BJ (cell line): ENCODE measurements at regions of chr20 and their contacts with region 1.

Region 1: DNA sequence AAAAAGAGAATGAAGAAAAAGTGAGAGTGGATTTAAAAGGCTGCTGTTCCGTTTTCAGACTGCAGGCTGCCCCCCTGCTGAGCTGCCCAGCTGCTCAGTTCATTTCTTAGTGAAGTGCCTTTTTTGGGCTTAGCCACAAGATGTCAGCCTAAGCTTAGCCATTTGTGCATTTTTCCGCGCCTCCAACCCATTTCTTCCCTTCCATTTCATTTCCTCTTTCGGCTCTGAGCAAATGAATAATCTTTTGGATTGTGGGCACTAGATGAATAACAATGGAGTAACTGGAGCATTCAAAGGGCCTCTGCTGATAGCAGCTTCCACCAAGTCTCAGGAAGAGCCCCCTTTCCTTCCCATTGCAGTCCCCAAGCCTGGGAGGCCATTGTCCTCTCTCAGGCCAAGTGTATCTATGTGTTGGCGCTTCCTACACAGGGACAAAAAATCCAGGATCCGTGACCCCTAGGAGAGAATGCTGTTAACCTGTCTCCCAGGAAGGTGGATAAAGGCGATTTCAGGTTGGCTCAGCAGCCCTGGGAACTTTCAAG is 83.5 kb upstream of the SPTLC3 start:
- DNase-seq: no peak
- H3K4me3 ChIP-seq: no peak overlapping the region
- H3K27me3 ChIP-seq: peaks cover 3% of the 10 kb centered on the region
- CTCF ChIP-seq: peak; percentile 87

Region 2: DNA sequence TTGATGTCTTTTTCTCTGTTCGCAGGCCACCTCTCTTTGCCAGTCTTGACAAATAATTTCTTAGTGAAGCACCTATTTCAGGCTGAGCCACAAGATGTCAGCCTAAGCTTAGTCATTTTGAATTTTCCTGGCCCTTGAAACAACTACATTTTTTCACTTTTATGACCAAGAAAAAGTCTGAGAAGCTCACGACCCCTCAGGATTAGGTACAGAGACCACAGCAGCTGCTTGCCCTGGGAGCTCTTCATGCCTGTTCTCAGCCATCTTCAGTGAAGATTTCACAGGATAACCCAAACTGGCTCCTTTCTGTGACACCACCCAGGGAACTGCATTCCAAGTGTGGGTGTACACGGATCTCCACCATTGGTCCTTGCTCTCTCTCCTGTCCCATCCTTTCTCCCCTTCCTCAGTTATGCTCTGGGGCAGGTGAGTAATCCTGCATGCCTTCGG is 45.1 kb after region 1 on chr20:
- CTCF ChIA-PET with region 1: interaction called, 48 read pairs
- POLR2A ChIA-PET with region 1: no interaction called
- DNase-seq: no peak
- H3K4me3 ChIP-seq: no peak overlapping the region
- H3K27me3 ChIP-seq: peaks cover 2% of the 10 kb centered on the region; the same call in 1 of the 2 replicates
- CTCF ChIP-seq: peak; percentile 54

Region 3: DNA sequence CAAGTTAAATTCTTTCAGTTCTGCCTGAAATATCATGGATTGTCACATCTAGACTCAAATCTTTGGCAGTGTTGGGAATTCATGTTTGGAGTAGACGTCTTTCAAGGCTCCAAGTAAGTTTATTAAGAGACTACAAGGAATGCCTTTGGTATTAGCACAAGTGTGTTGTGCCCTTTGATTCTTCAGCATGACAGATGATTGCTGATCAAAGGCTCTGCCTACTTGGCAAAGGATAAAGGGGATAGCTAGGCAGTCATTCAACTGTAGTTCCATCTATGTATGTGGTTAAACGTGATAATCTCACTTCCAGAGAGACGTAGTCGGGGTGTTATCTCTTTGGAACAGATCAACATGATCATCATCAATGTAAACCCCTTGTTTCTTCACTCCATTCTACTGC is 169.7 kb after region 1 on chr20:
- CTCF ChIA-PET with region 1: interaction called, 14 read pairs
- POLR2A ChIA-PET with region 1: no interaction called
- DNase-seq: no peak
- H3K4me3 ChIP-seq: no peak overlapping the region
- H3K27me3 ChIP-seq: no peaks in the 10 kb centered on the region
- CTCF ChIP-seq: no peak

Region 4: GRCh38 chr20:13105864-13106457 is 180.7 kb after region 1 on chr20:
- CTCF ChIA-PET with region 1: interaction called, 30 read pairs
- POLR2A ChIA-PET with region 1: no interaction called
- DNase-seq: no peak
- H3K4me3 ChIP-seq: no peak overlapping the region
- H3K27me3 ChIP-seq: peaks cover 2% of the 10 kb centered on the region
- CTCF ChIP-seq: peak; percentile 66

Region 5: GRCh38 chr20:13111249-13111911 is 186.1 kb after region 1 on chr20:
- CTCF ChIA-PET with region 1: interaction called, 15 read pairs
- POLR2A ChIA-PET with region 1: no interaction called
- DNase-seq: no peak
- H3K4me3 ChIP-seq: no peak overlapping the region
- H3K27me3 ChIP-seq: peaks cover 2% of the 10 kb centered on the region
- CTCF ChIP-seq: no peak